AG04450 (cell line): ENCODE measurements at regions of chr14 and their contacts with region 1.

Region 1: GRCh38 chr14:59576332-59577294 is at the start of gene CCDC175:
- DNase-seq: peak; percentile 41
- H3K4me3 ChIP-seq: peak within 1 kb of the TSS; percentile 53
- H3K27ac ChIP-seq: no peak within 1 kb of the TSS
- H3K27me3 ChIP-seq: peaks cover 7% of the 10 kb centered on the region
- CTCF ChIP-seq: peak; percentile 82
- polyA plus RNA-seq, gene CCDC175: not detected in 2 replicates

Region 2: DNA sequence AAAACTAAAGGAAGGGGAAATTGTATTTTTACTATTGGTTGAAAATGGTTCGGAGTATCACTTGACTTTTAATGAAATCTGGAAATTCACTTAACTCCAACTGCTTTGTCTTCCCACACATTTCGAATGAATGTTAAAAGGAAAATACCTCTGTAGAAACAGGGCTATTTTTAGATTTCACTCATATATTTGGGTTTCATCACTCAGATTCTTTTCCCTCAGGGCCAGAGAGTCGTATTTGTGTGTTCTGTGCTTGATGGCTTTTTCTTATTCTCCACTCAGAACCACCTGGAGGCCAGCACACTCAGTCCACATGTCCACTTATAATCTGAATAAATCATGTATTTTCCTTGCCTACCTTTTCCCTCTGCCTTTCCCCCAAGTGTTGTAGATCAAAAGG is 348.2 kb before region 1 on chr14:
- CTCF ChIA-PET with region 1: no interaction called
- POLR2A ChIA-PET with region 1: no interaction called
- DNase-seq: no peak
- H3K4me3 ChIP-seq: no peak overlapping the region
- H3K27ac ChIP-seq: no peak overlapping the region
- H3K27me3 ChIP-seq: no peaks in the 10 kb centered on the region
- CTCF ChIP-seq: no peak

Region 3: GRCh38 chr14:59483900-59484638 is 92.5 kb before region 1 on chr14 and contains the starts of genes JKAMP and L3HYPDH:
- CTCF ChIA-PET with region 1: interaction called, 18 read pairs
- POLR2A ChIA-PET with region 1: interaction called, 3 read pairs
- DNase-seq: peak; percentile 87
- H3K4me3 ChIP-seq: peak within 1 kb of the TSS; percentile 87
- H3K27ac ChIP-seq: peak within 1 kb of the TSS; percentile 98
- H3K27me3 ChIP-seq: no peaks in the 10 kb centered on the region
- CTCF ChIP-seq: peak; percentile 68
- polyA plus RNA-seq, gene JKAMP: 162 and 208 TPM in 2 replicates
- polyA plus RNA-seq, gene L3HYPDH: 49.8 and 67.3 TPM in 2 replicates

Region 4: DNA sequence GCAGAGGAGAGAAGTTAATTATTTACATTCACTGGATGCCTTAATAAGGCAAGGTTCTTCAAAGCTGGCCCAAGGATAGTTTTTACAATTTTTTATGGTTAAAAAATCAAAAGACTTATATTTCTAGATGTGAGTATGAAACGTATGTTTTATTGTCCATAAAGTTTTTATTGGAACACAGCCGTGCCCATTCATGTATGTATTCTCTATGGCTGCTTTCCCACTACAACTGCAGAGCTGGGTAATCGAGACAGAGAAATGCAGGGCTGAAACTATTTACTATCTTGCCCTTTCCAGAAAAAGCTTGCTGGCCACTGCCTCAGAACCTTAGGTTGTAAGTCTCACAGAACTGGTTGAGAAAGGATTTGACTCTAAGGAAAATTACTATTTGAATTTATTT is 75.9 kb before region 1 on chr14:
- CTCF ChIA-PET with region 1: interaction called, 32 read pairs
- POLR2A ChIA-PET with region 1: no interaction called
- DNase-seq: no peak
- H3K4me3 ChIP-seq: no peak overlapping the region
- H3K27ac ChIP-seq: no peak overlapping the region
- H3K27me3 ChIP-seq: no peaks in the 10 kb centered on the region
- CTCF ChIP-seq: no peak

Region 5: GRCh38 chr14:59529189-59529588 is 47.4 kb before region 1 on chr14:
- CTCF ChIA-PET with region 1: interaction called, 23 read pairs
- POLR2A ChIA-PET with region 1: no interaction called
- DNase-seq: no peak
- H3K4me3 ChIP-seq: no peak overlapping the region
- H3K27ac ChIP-seq: no peak overlapping the region
- H3K27me3 ChIP-seq: no peaks in the 10 kb centered on the region
- CTCF ChIP-seq: no peak

Region 6: GRCh38 chr14:59534361-59534987 is 42.1 kb before region 1 on chr14:
- CTCF ChIA-PET with region 1: interaction called, 23 read pairs
- POLR2A ChIA-PET with region 1: no interaction called
- DNase-seq: no peak
- H3K4me3 ChIP-seq: no peak overlapping the region
- H3K27ac ChIP-seq: no peak overlapping the region
- H3K27me3 ChIP-seq: no peaks in the 10 kb centered on the region
- CTCF ChIP-seq: no peak

Region 7: DNA sequence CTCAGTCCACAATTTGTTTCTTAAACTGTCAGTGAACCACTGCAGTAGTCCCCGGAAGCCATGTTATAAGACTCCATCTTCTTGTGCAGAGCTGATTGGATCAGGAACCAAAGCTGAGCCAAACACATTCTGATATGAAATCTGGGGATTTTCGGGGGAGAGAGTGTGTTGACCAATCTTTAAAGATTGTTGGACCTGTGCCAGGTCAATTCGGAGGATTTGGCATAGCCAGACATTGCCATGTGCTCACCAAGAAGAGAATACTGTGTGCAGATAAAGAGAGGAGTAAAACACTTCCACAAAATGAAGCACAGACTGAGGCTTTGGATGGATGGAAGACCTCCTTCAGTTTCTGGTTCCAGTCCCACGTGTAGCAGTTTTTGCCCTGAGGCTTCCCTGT is 16.3 kb before region 1 on chr14:
- CTCF ChIA-PET with region 1: interaction called, 28 read pairs
- POLR2A ChIA-PET with region 1: no interaction called
- DNase-seq: no peak
- H3K4me3 ChIP-seq: no peak overlapping the region
- H3K27ac ChIP-seq: no peak overlapping the region
- H3K27me3 ChIP-seq: peaks cover 6% of the 10 kb centered on the region
- CTCF ChIP-seq: no peak

Region 8: DNA sequence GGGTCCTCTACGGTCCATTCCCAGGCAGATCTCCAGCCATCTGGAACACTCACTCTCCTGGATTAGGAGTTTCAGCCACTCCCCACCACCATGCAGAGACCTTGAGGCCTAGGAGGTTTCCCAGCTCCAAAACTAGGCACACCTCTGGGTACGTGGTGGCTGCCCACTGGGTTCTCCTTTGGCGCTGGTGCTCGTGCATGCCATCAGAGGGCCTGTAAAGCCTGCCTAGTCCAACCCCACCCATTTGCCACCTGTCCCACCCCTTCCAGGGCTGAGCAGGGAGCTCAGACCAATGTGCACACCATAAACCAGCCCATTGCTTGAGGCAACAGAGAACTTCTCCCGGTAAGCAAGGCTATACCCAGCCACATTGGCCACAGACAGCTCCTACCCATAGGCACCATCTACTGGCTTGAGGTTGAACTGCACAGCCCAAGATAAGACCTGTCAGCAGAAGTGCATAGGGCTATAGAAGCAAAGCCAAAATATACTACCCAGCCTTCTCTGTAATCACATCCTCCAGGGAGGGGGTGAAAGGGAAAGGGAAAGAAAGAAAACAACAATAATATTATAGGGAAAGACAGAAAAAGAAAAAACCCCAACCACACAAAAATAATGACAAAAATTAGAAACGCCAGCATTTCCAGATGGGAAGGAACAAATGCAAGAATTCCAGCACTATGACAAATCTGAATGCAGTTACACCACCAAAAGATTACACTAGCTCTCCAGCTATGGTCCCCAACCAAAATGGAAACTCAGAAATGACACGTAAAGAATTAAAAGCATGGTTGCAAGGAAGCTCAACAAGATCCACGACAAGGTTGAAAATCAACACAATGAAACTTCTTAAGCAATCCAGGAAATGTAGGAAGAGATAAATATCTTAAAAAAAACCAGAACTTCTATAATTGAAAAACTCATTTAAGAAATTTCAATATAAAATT is 111.9 kb after region 1 on chr14:
- CTCF ChIA-PET with region 1: no interaction called
- POLR2A ChIA-PET with region 1: no interaction called
- DNase-seq: peak; percentile 20
- H3K4me3 ChIP-seq: no peak overlapping the region
- H3K27ac ChIP-seq: no peak overlapping the region
- H3K27me3 ChIP-seq: peaks cover 3% of the 10 kb centered on the region
- CTCF ChIP-seq: peak; percentile 90